ENCODE measurements at regions of chr7 and their contacts with region 1.

Region 1: DNA sequence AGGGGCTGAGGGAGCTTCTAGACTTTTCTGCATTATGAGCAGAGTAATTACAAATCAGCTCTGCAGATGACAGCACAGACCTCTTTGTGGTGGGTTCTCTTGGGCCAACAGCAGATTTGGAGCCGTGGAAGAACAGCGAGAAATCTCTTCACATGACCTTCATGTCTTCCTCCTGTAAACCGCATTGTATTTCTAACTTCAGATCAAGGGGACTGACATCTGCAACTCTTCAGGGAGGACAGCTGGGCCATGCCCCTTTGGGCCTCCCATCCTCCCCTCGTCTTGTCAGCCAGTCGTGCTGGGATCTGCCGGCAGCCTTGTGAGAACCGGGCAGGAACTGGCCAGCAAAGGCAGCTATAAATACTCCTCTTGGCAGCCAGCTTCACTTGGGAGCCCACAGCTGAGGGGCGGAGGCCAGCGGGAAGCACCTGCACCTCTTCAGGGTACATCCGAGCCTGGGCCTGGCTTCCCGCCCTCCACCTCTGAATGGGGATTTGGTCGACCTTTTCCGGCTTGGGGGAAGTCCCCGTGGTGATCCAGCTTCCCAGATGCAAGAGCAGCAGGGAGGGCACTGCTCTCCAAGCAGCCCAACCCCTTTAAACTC is 54.7 kb downstream of the STEAP1B start:
- DNase-seq: no peak
- H3K4me3 Mint-ChIP-seq: no peak overlapping the region
- H3K27ac Mint-ChIP-seq: no peak overlapping the region
- H3K4me1 Mint-ChIP-seq: peaks cover 11% of the 10 kb centered on the region
- H3K27me3 Mint-ChIP-seq: peaks cover 18% of the 10 kb centered on the region

Region 2: DNA sequence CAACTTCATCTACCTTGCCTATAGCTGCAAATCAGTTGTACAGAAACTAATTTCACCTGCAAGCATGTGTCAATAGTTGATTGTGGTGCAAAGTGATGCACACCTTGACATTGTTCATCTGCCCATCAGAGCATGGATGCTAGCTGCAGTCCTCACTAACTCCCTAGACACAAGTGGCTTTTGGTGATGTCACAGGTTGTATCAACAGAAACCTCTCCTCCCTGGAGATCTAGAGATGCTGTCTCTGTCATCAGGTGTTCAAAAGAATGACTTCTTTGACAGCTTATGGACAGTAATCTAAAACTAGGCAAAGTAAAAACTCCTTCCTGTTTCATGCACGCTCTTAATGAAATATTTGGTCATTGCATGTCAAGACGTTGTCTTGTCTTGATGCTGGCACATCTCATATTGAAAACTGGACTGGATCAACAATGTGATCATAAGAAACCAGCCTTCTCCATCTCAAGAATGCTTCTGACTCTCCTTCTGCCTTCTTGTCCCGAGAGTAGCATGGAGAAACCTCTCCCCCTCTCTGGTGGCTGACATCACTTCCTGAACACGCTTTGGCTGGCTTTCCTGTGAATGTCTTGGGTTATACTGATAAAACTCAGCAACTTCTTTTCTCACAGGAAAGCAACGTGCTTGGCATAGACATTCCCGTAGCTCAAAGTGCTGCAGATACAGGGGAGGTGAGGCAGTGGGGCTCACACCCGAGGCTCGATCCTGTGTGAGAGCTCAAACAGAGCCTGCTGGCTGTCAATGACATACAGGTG is 323.4 kb before region 1 on chr7:
- CTCF ChIA-PET with region 1: no interaction called
- POLR2A ChIA-PET with region 1: no interaction called
- intact Hi-C with region 1: loop called (anchors 5 kb)
- DNase-seq: peak; percentile 24
- H3K4me3 Mint-ChIP-seq: no peak overlapping the region
- H3K27ac Mint-ChIP-seq: no peak overlapping the region
- H3K4me1 Mint-ChIP-seq: peaks cover 9% of the 10 kb centered on the region
- H3K27me3 Mint-ChIP-seq: peaks cover 5% of the 10 kb centered on the region

Region 3: GRCh38 chr7:22238354-22239311 is 206.6 kb before region 1 on chr7:
- CTCF ChIA-PET with region 1: no interaction called
- POLR2A ChIA-PET with region 1: no interaction called
- intact Hi-C with region 1: no loop called
- DNase-seq: no peak
- H3K4me3 Mint-ChIP-seq: no peak overlapping the region
- H3K27ac Mint-ChIP-seq: no peak overlapping the region
- H3K4me1 Mint-ChIP-seq: no peaks in the 10 kb centered on the region
- H3K27me3 Mint-ChIP-seq: peaks cover 6% of the 10 kb centered on the region

Region 4: DNA sequence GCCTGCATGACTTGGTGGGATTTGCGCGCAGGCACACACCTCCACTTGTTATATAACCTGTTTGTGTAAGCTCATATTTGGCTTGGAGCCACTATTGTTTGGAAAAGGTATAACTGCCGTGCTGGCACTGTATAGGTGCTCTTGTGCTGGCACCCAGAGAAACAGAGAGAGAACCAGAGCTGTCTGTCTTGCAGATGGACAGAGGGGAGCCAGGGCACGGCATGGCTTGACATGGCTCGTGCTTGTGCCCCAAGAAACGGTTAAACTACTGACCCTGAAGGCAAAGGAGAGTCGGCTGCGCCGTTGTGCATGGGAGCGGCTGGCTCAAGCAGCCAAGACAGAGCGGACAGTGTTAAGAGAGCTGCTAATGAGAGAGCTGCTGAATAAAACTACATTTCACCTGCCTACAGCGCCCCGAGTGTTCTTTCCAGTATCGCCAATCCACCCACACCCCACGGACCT is 111.5 kb before region 1 on chr7:
- CTCF ChIA-PET with region 1: no interaction called
- POLR2A ChIA-PET with region 1: no interaction called
- intact Hi-C with region 1: no loop called
- DNase-seq: no peak
- H3K4me3 Mint-ChIP-seq: no peak overlapping the region
- H3K27ac Mint-ChIP-seq: no peak overlapping the region
- H3K4me1 Mint-ChIP-seq: no peaks in the 10 kb centered on the region
- H3K27me3 Mint-ChIP-seq: peaks cover 12% of the 10 kb centered on the region

Region 5: DNA sequence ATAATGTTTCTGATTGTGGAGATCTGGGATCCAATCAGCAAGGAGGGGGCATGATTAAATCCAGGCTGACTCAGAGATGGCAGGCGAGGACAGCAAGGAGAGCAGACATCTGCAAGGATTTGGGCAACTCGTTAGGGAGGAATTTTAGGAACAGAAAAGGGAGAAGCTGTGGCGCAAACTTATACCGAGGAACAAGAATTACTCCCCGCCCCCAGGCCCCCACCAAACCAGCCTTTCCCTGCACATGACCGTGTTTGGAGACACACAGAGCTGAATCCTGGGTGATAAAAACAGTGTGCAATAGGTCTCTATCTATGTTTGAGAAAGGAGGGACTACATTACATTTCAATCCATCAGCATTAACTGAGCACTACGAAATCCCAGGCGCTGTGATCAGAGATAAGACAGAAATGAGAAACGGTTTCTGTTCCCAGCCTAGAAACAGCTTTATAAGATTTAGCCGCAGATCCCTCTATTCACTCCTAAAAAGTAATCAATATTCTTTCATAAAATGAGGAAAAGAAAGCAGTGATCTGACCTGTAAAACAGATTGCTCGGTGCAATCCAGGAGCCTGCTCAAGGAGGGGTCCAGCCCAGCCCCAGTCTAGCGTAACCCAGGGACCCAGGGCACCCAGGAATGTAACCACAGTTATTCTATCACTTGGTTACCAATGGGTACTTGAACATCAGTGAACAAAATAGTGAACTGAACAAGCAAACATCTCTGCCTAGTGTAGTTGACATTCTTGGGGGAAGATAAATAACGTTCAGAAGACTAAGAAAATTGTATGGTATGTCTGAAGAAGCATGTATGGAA is 51.1 kb before region 1 on chr7:
- CTCF ChIA-PET with region 1: no interaction called
- POLR2A ChIA-PET with region 1: no interaction called
- intact Hi-C with region 1: no loop called
- DNase-seq: no peak
- H3K4me3 Mint-ChIP-seq: no peak overlapping the region
- H3K27ac Mint-ChIP-seq: no peak overlapping the region
- H3K4me1 Mint-ChIP-seq: no peaks in the 10 kb centered on the region
- H3K27me3 Mint-ChIP-seq: no peaks in the 10 kb centered on the region

Region 6: GRCh38 chr7:22477876-22478450 is 32.7 kb after region 1 on chr7:
- CTCF ChIA-PET with region 1: no interaction called
- POLR2A ChIA-PET with region 1: no interaction called
- intact Hi-C with region 1: no loop called
- DNase-seq: no peak
- H3K4me3 Mint-ChIP-seq: no peak overlapping the region
- H3K27ac Mint-ChIP-seq: no peak overlapping the region
- H3K4me1 Mint-ChIP-seq: peaks cover 7% of the 10 kb centered on the region
- H3K27me3 Mint-ChIP-seq: no peaks in the 10 kb centered on the region